Aorta (tissue), 5 donors: ENCODE measurements at regions of chr9 and their contacts with region 1.

Region 1: GRCh38 chr9:5186416-5187169 is 1.2 kb upstream of the INSL6 start:
- DNase-seq: no peak
- ATAC-seq: no peak
- H3K4me3 ChIP-seq: no peak overlapping the region
- H3K27ac ChIP-seq: no peak overlapping the region
- H3K4me1 ChIP-seq: no peaks in the 10 kb centered on the region
- H3K27me3 ChIP-seq: no peaks in the 10 kb centered on the region

Region 2: DNA sequence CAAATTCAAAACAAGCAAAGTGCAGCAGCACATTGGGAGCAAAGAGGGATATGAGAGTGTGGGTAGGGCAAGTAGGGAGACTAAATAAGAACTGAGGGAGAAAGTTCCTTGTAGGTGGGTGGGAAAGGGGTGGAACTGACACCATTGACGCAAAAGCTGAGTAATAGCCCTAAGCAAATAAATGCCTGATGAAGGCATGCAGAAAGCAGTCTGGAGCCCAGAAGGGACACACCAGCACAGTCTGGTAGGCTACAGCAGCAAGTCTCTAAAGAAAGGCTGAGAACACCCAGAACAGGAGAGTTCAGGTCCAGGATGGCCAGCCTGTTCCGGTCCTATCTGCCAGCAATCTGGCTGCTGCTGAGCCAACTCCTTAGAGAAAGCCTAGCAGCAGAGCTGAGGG is 44.6 kb after region 1 on chr9 and contains the start of gene INSL4:
- intact Hi-C with region 1: no loop called
- DNase-seq: no peak
- ATAC-seq: no peak
- H3K4me3 ChIP-seq: no peak within 1 kb of the TSS
- H3K27ac ChIP-seq: no peak within 1 kb of the TSS
- H3K4me1 ChIP-seq: no peaks in the 10 kb centered on the region
- H3K27me3 ChIP-seq: no peaks in the 10 kb centered on the region
- total RNA-seq, gene INSL4: not detected

Region 3: DNA sequence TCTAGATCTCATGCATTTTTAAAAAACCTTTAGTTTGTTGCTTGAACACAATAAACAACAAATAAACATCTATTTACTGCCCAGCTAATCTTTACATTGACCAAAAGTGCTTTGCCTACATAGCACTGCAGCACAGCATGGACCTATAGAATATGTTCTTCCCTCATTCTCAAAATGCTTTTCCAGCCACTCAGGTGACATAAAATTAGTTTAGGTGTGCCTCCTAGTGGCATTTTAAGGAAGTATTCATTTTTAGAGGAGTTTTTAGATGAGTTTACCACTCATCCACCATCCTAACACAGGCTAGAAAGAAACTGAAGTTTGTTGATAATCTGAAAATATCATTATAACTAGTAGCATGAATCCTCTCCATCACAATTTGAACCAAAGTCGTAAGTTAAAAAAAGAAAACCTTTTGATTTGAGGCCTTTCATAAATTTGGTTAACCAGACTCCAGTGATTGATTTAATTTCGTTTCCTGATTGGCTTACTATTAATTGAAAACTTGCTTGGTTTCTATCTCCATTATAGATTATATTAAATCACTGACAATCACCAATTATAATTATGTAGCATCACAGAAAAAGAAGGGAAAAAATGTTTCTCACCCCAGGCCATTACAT is 238.5 kb after region 1 on chr9:
- intact Hi-C with region 1: loop called in 1 of 2 experiments (anchors 5 kb)
- DNase-seq: no peak
- ATAC-seq: no peak
- H3K4me3 ChIP-seq: no peak overlapping the region
- H3K27ac ChIP-seq: no peak overlapping the region
- H3K4me1 ChIP-seq: no peaks in the 10 kb centered on the region
- H3K27me3 ChIP-seq: no peaks in the 10 kb centered on the region

Region 4: GRCh38 chr9:5593904-5594303 is 407.3 kb after region 1 on chr9:
- intact Hi-C with region 1: loop called in 1 of 2 experiments (anchors 5 kb)
- DNase-seq: no peak
- ATAC-seq: no peak
- H3K4me3 ChIP-seq: no peak overlapping the region
- H3K27ac ChIP-seq: no peak overlapping the region
- H3K4me1 ChIP-seq: no peaks in the 10 kb centered on the region
- H3K27me3 ChIP-seq: no peaks in the 10 kb centered on the region

Region 5: GRCh38 chr9:5608298-5609225 is 422.0 kb after region 1 on chr9:
- intact Hi-C with region 1: loop called in 1 of 2 experiments (anchors 10 kb)
- DNase-seq: no peak
- ATAC-seq: peak; percentile 78
- H3K4me3 ChIP-seq: peak overlapping the region; percentile 67 to 94
- H3K27ac ChIP-seq: peak overlapping the region; percentile 92 to 93
- H3K4me1 ChIP-seq: peaks cover 0 to 2% of the 10 kb centered on the region in 2 donors
- H3K27me3 ChIP-seq: no peaks in the 10 kb centered on the region